Mammary epithelial cell (primary cell): ENCODE measurements at regions of chr5 and their contacts with region 1.

Region 1: DNA sequence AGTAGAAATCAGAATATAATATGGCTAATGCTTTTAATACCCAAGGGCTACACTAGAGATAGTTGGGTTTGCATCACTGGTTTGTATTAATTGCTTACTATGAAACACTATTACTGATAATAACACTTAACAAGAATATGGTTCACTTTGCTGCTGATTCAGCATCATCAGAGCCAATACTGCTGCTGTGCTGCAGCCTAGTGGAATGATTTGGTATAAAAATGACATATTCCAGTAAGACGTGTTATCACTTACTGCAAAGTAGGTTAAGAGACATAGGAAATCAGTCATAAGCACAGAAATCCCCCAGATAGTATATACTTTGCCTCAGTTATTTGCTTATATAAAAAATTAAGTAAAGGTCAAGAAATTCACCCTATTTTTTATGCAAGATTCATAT is 2.8 kb downstream of the CDH10 start:
- DNase-seq: peak; percentile 8
- H3K4me3 ChIP-seq: no peak overlapping the region
- H3K27ac ChIP-seq: no peak overlapping the region
- H3K4me1 ChIP-seq: no peaks in the 10 kb centered on the region
- H3K27me3 ChIP-seq: no peaks in the 10 kb centered on the region
- CTCF ChIP-seq: peak; percentile 72 to 76

Region 2: GRCh38 chr5:24232929-24233498 is 409.0 kb before region 1 on chr5:
- CTCF ChIA-PET with region 1: no interaction called
- dilution Hi-C with region 1: no loop called
- in situ Hi-C with region 1: no loop called
- intact Hi-C with region 1: loop called (anchors 1 kb)
- DNase-seq: no peak
- H3K4me3 ChIP-seq: no peak overlapping the region
- H3K27ac ChIP-seq: no peak overlapping the region
- H3K4me1 ChIP-seq: no peaks in the 10 kb centered on the region
- H3K27me3 ChIP-seq: no peaks in the 10 kb centered on the region
- CTCF ChIP-seq: peak; percentile 39 to 53

Region 3: DNA sequence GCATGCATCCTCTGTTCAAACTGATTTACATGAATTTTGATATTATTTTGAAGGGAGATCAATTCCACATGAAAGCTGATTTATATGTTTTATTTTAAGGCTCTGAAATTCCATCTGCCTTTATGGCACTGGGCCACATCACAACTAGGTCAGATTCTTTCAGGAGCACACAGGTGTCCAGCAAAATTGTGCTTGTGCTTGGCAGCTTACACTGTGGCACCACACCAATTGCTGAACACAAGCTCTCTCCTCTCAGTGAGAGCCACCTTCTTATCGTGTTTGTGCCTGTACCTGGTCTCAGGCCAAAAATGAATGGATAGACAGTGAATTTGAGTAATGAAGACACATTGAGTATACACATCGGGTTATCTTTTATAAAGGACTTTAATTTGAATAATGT is 197.6 kb before region 1 on chr5:
- CTCF ChIA-PET with region 1: no interaction called
- dilution Hi-C with region 1: no loop called
- in situ Hi-C with region 1: no loop called
- intact Hi-C with region 1: loop called (anchors 5 kb)
- DNase-seq: no peak
- H3K4me3 ChIP-seq: no peak overlapping the region
- H3K27ac ChIP-seq: no peak overlapping the region
- H3K4me1 ChIP-seq: no peaks in the 10 kb centered on the region
- H3K27me3 ChIP-seq: no peaks in the 10 kb centered on the region
- CTCF ChIP-seq: no peak

Region 4: GRCh38 chr5:24630925-24631324 is 11.1 kb before region 1 on chr5:
- CTCF ChIA-PET with region 1: no interaction called
- dilution Hi-C with region 1: no loop called
- in situ Hi-C with region 1: no loop called
- intact Hi-C with region 1: no loop called
- DNase-seq: no peak
- H3K4me3 ChIP-seq: no peak overlapping the region
- H3K27ac ChIP-seq: no peak overlapping the region
- H3K4me1 ChIP-seq: no peaks in the 10 kb centered on the region
- H3K27me3 ChIP-seq: no peaks in the 10 kb centered on the region
- CTCF ChIP-seq: no peak